Thyroid gland (tissue), 4 donors: ENCODE measurements at regions of chr15 and their contacts with region 1.

Region 1: DNA sequence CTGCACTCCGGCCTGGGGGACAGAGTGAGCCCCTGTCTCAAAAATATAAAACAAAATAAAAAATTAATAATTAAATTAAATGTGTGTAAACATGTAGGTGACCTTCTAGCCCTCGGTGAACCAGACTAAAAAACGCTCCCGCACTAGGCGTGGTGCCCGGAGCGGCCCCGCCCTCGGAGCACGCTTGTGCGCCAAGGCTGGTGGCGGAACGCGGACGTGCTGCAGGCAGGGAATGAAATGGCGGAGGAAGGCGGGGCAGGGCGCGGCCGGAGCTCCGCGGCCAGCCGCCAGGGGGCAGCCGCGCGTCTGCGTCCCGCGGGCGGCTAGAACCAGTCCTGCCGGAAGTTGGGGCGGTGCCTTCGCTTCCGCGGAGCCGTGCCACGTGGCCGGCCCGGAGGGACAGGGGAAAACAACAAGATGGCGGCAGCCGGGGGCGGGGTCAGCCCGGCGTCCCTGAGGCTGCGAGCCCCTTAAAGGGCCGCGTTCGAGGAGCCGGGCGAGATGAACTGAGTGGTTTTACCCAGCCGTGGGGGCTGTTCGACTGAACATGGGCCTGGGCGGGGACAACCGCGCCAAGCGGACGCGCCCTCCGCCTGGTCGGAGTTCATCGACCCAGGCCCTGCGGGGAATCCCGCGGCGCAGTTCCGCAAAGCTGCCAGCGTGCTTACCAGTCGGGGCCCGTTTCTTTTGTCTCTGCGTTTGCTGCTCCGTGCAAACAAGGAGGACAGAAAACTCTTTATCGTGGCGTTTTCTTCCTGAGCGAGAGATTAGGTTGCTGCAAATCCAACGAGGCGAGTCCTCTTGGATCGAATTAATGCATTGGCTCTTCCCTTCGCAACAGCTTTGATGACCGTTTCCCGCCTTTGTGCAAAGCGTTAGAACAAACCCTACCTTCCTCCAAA is 90.9 kb upstream of the CHD2 start:
- DNase-seq: peak; percentile 98
- H3K4me3 ChIP-seq: peak overlapping the region; percentile 4 to 51 (median 50)
- H3K27ac ChIP-seq: peak overlapping the region; percentile 94 to 99 (median 99)
- H3K4me1 ChIP-seq: peaks cover 32 to 49% of the 10 kb centered on the region in 2 donors
- H3K27me3 ChIP-seq: no peaks in the 10 kb centered on the region
- CTCF ChIP-seq: peak; percentile 61 to 100 (median 98)
- POLR2A ChIP-seq: peak; percentile 74 to 94

Region 2: GRCh38 chr15:92861742-92862141 is 52.5 kb after region 1 on chr15:
- intact Hi-C with region 1: no loop called
- DNase-seq: no peak
- H3K4me3 ChIP-seq: no peak overlapping the region
- H3K27ac ChIP-seq: no peak overlapping the region
- H3K4me1 ChIP-seq: no peaks in the 10 kb centered on the region
- H3K27me3 ChIP-seq: no peaks in the 10 kb centered on the region
- CTCF ChIP-seq: no peak
- POLR2A ChIP-seq: no peak

Region 3: DNA sequence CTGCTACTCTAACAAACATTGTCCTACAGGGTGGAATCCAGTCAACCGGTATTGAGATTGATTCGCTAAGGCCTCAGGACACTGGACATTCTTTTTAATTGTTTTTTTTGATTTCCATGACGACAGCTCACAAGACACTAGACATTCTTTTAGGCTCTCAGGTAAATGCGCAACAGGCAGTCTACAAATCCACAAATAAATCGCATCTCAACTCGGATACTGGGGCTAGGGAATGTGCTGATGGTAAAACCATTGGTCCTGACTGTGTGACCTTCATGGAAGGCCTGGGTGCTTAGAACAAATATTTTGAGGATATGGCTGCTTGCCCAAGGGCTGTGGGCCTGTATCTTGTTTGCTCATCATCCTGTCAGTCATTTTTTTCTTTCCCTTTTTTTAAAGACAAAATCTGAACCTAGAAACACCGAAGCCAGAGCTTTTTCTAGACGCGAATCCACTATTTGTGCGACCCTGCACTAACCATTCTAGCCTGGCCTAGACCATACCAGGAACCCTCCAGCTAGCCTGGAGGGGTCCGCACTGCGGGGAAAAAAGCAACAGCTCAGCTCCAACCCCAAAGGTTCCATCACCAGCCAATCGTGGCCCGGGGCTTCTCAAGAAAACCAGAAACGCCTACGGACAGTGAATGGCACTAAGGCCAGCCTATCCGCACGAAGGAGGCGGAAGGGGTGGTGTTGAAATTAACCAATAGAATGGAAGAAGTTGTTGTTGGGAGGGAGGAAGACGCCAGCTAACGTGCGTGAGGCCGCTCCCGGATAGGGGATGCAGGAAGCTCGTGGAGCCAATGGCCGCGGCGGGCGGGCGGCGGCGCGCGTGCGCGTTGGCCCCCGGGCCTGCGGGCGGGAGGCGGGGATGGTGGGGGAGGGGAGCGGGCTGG is 72.8 kb after region 1 on chr15:
- intact Hi-C with region 1: loop called (anchors 2 kb)
- DNase-seq: peak; percentile 98 to 99
- H3K4me3 ChIP-seq: peak overlapping the region in 2 of 3 donors; percentile 18 to 22
- H3K27ac ChIP-seq: peak overlapping the region; percentile 92 to 100 (median 99)
- H3K4me1 ChIP-seq: peaks cover 35 to 54% of the 10 kb centered on the region in 2 donors
- H3K27me3 ChIP-seq: no peaks in the 10 kb centered on the region
- CTCF ChIP-seq: no peak
- POLR2A ChIP-seq: peak; percentile 94